ENCODE measurements at regions of chrX and their contacts with region 1.

Region 1: DNA sequence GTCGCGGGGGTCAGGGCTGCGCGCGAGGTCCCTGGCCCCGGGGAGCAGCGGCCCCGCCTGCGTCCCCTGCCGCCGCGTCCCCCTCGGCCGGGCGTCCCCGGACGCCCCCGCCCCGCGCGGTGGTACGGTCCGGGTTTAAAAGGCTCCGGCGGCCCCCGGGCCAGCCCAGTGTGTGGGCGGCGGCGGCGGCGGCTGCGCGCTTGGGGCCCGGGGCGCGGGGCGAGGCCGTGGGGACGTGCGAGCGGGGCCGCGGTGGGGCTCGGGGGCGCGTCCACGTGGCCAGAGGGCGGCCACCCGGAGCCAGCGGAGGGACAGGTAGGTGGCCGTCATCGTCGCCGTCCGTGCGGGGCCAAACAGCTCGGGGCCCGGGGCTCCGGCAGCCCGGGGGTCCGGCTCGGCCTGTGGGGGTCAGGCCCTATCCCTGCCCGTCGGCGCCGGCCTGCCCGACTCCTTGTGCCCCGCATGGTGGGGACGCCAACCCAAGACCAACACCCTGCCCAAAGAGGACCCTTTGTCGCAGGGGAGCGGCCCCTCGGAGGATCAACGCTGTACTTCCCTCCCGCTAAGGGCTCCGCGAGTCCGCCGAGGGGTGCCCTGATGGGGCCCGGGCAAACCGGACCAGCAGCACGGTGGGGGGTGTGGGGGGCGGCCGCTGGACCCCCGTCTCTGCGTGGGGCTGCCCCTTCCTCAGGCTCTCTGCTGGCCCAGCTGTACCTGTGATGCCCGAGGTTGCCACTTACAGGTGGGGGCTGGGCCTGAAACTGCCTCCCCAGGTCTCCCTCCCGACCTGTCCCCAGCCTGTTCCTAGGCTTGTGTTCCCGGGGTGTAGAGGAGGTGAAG is at the start of gene PLXNA3:
- DNase-seq: peak; percentile 70 to 87 (median 82)
- ATAC-seq: peak; percentile 66
- H3K4me3 ChIP-seq: peak within 1 kb of the TSS; percentile 59
- H3K27ac ChIP-seq: peak within 1 kb of the TSS; percentile 74
- H3K4me1 ChIP-seq: peaks cover 7 to 50% of the 10 kb centered on the region in 2 experiments; a peak in 3 of 5 replicates
- H3K27me3 ChIP-seq: no peaks in the 10 kb centered on the region
- CTCF ChIP-seq: no peak
- EP300 ChIP-seq: no peak
- POLR2A ChIP-seq: no peak
- RAD21 ChIP-seq: no peak
- polyA plus RNA-seq, gene PLXNA3: 0.32 to 0.42 TPM

Region 2: DNA sequence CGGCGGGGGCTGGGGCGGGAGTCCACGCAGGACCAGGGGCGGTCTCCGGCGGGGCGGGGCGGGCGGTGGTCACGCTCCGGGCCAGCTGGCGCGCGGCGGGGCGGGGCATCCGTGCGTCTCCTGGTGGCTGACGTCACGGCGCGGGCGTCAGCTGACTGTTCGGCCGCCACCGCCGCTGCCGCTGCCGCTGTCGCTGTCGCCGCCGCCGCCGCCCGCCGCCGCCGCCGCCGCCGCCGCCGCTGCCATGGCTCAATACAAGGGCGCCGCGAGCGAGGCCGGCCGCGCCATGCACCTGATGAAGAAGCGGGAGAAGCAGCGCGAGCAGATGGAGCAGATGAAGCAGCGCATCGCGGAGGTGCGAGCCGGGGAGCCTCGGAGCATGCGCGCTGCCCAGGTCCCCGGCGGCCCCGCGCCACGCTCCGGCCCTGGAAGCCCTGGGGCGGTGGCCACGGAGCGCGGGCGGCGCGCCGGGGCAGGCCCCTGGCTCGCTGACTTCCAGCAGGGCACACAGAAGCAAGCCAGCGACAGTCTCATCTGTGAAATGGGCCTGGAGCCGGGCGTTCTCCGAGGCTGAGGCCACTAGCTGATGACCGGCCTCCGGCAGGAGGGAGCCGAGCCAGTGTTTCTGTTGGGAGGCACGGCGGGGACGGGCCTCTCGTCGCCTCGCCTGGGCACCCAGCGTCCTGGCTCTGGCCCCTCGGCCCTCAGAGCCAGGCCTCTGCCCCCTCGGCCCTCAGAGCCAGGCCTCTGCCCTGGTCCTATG is 14.2 kb before region 1 on chrX and contains the start of gene FAM50A:
- CTCF ChIA-PET with region 1: no interaction called
- POLR2A ChIA-PET with region 1: interaction called, 10 read pairs
- in situ Hi-C with region 1: no loop called
- intact Hi-C with region 1: no loop called
- DNase-seq: peak; percentile 85 to 88 (median 86)
- ATAC-seq: peak; percentile 94
- H3K4me3 ChIP-seq: peak within 1 kb of the TSS; percentile 76
- H3K27ac ChIP-seq: peak within 1 kb of the TSS; percentile 80
- H3K4me1 ChIP-seq: peaks cover 9 to 36% of the 10 kb centered on the region in 2 experiments; a peak in 4 of 5 replicates
- H3K27me3 ChIP-seq: no peaks in the 10 kb centered on the region
- CTCF ChIP-seq: no peak
- EP300 ChIP-seq: no peak
- POLR2A ChIP-seq: no peak
- RAD21 ChIP-seq: no peak
- polyA plus RNA-seq, gene FAM50A: 4.4 to 5.5 TPM

Region 3: DNA sequence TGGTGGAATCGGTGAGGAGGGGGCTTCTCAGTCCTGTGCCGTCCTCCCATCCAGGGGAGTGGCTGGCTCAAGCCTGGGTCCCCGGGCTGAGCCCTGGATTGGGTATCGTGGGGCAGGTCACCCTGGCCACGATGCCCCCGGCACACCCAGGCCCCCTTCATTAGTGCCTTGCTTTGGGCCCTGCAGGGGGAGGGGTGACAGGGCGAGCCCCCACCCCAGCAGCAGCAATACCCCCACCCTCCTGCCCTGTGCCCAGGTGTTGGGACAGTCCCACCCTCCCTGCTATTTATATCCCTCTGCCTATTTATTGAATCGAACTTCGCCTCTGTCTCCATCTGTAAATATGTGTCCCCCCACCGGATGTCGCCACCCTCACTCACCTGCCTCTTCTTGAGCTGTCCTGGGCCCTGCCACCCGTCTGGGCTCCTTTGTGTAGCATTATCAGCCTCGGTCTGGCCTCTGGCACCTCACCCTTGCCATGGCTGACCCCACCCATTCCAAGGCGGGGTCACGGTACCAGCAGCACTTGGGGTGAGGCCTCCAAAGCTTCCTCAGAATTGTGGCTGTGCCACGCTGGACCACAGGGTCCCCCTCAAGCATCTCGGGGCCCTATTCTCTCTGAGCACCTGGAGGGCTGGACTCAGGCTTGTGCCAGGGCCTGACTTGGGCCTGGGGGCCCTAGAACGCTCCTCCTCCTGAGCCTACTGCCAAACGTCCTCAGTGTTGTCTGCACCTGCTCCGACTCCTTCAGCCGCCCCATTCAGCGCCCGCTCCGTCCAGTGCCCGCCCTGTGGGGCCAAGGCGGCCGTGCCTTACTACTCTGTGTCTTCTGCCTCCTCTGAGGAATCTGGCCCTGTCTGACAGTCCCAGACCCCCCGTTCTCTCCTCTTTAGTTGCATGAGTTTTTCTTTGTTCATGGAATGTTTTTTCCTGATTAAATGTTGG is 14.6 kb after region 1 on chrX:
- CTCF ChIA-PET with region 1: no interaction called
- POLR2A ChIA-PET with region 1: interaction called, 10 read pairs
- in situ Hi-C with region 1: no loop called
- intact Hi-C with region 1: no loop called
- DNase-seq: no peak
- ATAC-seq: no peak
- H3K4me3 ChIP-seq: no peak overlapping the region
- H3K27ac ChIP-seq: no peak overlapping the region
- H3K4me1 ChIP-seq: peaks cover 9 to 13% of the 10 kb centered on the region in 2 experiments; a peak in 4 of 5 replicates
- H3K27me3 ChIP-seq: no peaks in the 10 kb centered on the region
- CTCF ChIP-seq: 0 out of 6 replicates have a peak, but pooled peaks of 1 of the 3 experiments have one; percentile 11
- EP300 ChIP-seq: no peak
- POLR2A ChIP-seq: no peak
- RAD21 ChIP-seq: no peak

Region 4: DNA sequence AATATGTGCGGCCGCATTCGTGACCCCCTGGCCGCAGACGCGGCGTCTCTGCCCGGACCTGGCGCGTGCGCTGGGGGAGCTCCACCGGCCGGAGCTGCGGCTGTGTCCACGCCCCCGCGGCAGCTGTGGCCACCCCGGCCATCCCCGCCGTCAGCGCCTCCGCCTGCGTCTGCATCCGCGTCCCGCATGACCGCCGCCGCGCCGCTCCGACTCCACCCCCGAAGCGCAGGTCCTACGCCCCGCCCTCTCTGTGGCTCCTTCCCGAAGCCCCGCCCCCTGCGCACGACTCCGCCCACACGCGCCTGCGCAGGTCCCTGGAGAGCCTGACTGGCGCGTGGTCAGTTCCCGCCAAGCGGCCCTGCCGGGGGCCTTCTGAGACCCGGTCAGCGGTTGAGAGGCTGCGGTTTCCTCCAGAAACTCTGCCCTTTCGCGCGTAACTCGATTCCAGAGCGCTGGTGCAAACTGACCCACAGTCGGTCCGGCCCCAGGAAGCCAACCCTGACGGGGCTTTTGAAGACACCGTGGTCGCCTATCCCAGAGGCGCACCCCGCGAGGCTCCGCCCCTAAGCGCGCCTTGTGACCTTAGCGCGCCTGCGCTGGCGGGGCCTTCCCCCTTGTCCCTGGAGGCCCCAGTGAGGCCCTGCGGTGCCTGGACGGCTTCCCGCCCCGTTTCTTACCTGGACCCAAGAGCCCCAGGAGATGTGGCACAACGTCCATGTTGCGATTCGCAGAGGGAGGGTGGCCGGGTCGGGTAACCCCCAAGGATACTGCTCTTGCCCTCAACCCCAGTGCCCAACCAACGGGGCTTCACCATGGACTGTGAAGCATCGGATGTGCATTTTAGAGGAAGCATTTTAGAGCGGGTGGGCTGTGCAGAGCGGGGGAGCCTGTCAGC is 20.6 kb after region 1 on chrX and contains the start of gene LAGE3:
- CTCF ChIA-PET with region 1: no interaction called
- POLR2A ChIA-PET with region 1: interaction called, 11 read pairs
- in situ Hi-C with region 1: no loop called
- intact Hi-C with region 1: no loop called
- DNase-seq: peak; percentile 87 to 95 (median 92)
- ATAC-seq: peak; percentile 92
- H3K4me3 ChIP-seq: peak within 1 kb of the TSS; percentile 60
- H3K27ac ChIP-seq: peak within 1 kb of the TSS; percentile 94
- H3K4me1 ChIP-seq: peaks cover 36 to 46% of the 10 kb centered on the region in 2 experiments
- H3K27me3 ChIP-seq: no peaks in the 10 kb centered on the region
- CTCF ChIP-seq: no peak; a peak in 1 of 6 replicates
- EP300 ChIP-seq: peak; percentile 7; the same call in 1 of the 2 replicates
- POLR2A ChIP-seq: peak; percentile 75
- RAD21 ChIP-seq: no peak
- polyA plus RNA-seq, gene LAGE3: 28.2 to 31.1 TPM

Region 5: GRCh38 chrX:155694649-155695048 is 1236.3 kb after region 1 on chrX:
- CTCF ChIA-PET with region 1: no interaction called
- POLR2A ChIA-PET with region 1: no interaction called
- in situ Hi-C with region 1: no loop called
- intact Hi-C with region 1: no loop called
- DNase-seq: no peak
- ATAC-seq: no peak
- H3K4me3 ChIP-seq: no peak overlapping the region
- H3K27ac ChIP-seq: no peak overlapping the region
- H3K4me1 ChIP-seq: no peaks in the 10 kb centered on the region
- H3K27me3 ChIP-seq: no peaks in the 10 kb centered on the region
- CTCF ChIP-seq: no peak
- EP300 ChIP-seq: no peak
- POLR2A ChIP-seq: no peak
- RAD21 ChIP-seq: no peak